Dendritic cell treated with granulocyte-macrophage colony-stimulating factor and Interleukin-4, amounts not matched to agents 40 ng/mL and 50 ng/mL, for 4 days (primary cell): ENCODE measurements at regions of chr17 and their contacts with region 1.

Region 1: GRCh38 chr17:47315451-47316266 is 8.1 kb upstream of the EFCAB13 start:
- H3K4me3 Mint-ChIP-seq: no peak overlapping the region
- H3K27ac Mint-ChIP-seq: no peak overlapping the region
- H3K4me1 Mint-ChIP-seq: no peaks in the 10 kb centered on the region
- H3K27me3 Mint-ChIP-seq: peaks cover 3% of the 10 kb centered on the region

Region 2: DNA sequence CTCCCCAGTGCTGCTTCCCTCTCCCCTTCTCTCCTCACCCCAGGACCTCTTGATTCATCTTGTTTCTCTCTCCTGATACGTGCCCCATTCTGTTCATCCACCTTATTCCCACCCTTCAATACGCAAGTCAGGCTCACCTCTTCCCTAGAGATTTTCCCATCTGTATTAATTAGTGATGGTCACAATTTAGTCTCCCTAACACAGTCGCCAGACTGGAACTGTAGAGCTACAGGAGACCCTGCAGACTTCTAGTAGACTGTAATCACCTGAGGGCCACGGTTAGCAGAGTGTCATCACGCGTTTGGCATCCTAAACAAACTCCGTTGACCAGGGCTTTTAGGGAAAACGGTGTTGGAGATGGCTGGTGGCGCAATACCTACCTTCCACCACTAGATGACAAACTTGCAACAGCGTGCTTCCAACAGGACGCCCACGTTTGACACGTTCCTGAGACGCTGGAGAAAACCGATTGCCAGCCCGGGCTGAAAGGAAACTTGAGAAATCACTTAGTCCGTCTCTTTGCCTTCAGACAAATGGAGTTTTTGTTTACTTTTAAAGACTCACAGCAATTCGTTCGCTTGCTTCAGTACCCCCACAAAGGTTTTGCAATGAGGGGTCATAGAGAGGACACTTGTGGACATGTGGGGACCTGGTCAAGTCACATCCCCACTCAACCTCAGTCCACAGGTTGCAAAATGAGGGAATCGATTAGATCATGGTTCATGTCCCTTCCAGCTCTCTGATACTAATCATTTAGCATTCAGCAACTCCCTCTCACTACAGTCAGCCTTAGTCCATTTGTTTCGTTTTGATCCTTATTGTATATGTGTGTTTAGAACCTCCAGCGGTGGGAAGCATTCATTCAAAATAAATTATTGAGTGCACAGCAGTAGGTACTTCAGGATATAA is 85.9 kb before region 1 on chr17:
- intact Hi-C with region 1: loop called (anchors 1 kb)
- H3K4me3 Mint-ChIP-seq: peak overlapping the region; percentile 38
- H3K27ac Mint-ChIP-seq: peak overlapping the region; percentile 42
- H3K4me1 Mint-ChIP-seq: peaks cover 56% of the 10 kb centered on the region
- H3K27me3 Mint-ChIP-seq: peaks cover 9% of the 10 kb centered on the region

Region 3: DNA sequence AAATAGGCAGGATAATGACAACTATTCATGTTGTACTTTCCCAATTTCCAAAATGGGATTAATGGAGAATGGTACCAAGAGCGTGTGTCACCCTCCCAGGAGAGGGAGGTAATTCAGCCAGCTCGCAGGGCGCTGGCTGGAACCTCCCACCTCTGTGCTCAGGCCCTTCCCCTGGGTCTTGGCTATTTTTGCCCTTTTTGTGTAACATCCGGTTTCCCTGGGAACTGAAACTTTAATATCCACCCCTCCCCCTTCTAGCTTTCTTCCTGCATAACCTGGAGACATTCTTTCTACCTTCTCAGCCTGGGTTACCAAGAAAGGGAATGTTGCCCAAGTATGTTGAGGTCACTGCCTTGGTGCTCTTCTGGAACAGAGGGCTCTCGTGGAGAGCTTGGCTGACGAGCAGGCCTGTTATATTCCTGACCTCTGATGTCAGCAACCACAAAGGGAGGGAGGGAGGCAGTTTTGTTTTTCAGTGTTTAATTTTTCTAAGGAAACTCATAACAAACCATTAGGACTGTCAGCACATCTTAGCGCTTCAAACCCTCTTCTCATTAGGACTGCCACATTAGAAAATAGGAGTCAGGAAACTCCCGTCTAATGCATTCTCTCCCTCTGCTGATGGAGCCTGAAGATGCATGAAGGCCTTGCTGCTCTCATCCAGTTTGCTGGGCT is 36.5 kb before region 1 on chr17:
- intact Hi-C with region 1: loop called (anchors 2 kb)
- H3K4me3 Mint-ChIP-seq: peak overlapping the region; percentile 64
- H3K27ac Mint-ChIP-seq: peak overlapping the region; percentile 79
- H3K4me1 Mint-ChIP-seq: peaks cover 68% of the 10 kb centered on the region
- H3K27me3 Mint-ChIP-seq: peaks cover 4% of the 10 kb centered on the region

Region 4: GRCh38 chr17:47633996-47634395 is 318.3 kb after region 1 on chr17:
- intact Hi-C with region 1: no loop called
- H3K4me3 Mint-ChIP-seq: no peak overlapping the region
- H3K27ac Mint-ChIP-seq: no peak overlapping the region
- H3K4me1 Mint-ChIP-seq: peaks cover 15% of the 10 kb centered on the region
- H3K27me3 Mint-ChIP-seq: no peaks in the 10 kb centered on the region